ENCODE measurements at regions of chr17 and their contacts with region 1.

Region 1: GRCh38 chr17:5706577-5707216 is 122.4 kb upstream of the NLRP1 start:
- DNase-seq: peak in 9 of 10 donors; percentile 47 to 79 (median 68)
- H3K4me3 ChIP-seq: no peak overlapping the region
- H3K27ac ChIP-seq: peak overlapping the region in 3 of 59 donors; percentile 8 to 36 (median 12)
- H3K27me3 ChIP-seq: peaks cover 0 to 5% (median 0%) of the 10 kb centered on the region in 45 donors
- CTCF ChIP-seq: peak; percentile 46 to 86 (median 75)

Region 2: GRCh38 chr17:6413065-6413464 is 706.4 kb after region 1 on chr17:
- intact Hi-C with region 1: loop called in 1 of 2 experiments (anchors 10 kb)
- DNase-seq: no peak
- H3K4me3 ChIP-seq: no peak overlapping the region
- H3K27ac ChIP-seq: no peak overlapping the region
- H3K27me3 ChIP-seq: peaks cover 0 to 11% (median 0%) of the 10 kb centered on the region in 45 donors
- CTCF ChIP-seq: peak in 54 of 56 donors; percentile 25 to 63 (median 50)

Measured in dorsolateral prefrontal cortex (tissue), 120 donors.